HCT116 (cell line): ENCODE measurements at regions of chr14 and their contacts with region 1.

Region 1: GRCh38 chr14:49687942-49688700 is at the start of gene POLE2:
- DNase-seq: peak; percentile 44
- ATAC-seq: peak; percentile 90
- H3K4me3 ChIP-seq: peak within 1 kb of the TSS; percentile 76 to 81
- H3K27ac ChIP-seq: peak within 1 kb of the TSS; percentile 50
- H3K4me1 ChIP-seq: peaks cover 10 to 42% of the 10 kb centered on the region in 2 experiments
- H3K27me3 ChIP-seq: no peaks in the 10 kb centered on the region
- CTCF ChIP-seq: no peak
- POLR2A ChIP-seq: no peak
- RAD21 ChIP-seq: no peak
- total RNA-seq, gene POLE2: 24.5 TPM

Region 2: DNA sequence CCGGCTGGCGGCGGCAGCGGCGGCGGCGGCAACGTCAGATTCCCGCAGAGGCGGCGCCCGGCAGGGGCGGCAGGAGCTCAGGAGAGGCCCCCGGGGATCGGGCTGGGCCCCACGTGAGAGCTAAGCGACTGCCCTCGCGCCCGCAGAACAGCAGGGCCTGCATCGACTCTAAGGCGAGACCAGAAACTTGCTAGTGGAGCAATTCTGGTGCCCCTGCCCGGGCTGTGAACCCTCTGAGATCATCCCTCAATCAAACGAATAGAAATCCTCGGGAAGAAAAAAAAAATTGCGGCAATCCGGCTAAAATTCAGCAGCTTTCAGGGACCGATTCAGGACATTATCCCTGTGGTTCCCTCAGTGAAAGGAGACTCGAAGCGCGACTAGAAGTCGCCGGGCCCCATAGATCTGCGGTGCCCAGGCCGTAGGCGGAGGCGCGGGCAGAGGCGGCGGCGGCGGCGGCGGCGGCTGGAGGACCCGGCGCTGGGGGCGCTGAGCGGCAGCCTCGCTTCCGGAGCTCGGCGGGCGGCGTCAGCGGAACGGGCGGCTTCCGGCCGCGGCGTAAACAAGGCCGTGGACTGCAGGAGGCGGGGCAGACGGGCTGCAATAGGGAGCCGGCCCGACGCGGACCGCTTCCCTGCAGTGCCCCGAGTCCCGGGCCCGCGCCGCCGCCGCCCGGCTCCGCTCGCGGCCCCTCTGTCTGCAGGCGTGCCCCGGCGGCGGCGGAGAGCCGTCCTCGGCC is 79.6 kb after region 1 on chr14 and contains the start of gene KLHDC2:
- CTCF ChIA-PET with region 1: no interaction called
- POLR2A ChIA-PET with region 1: interaction called, 4 read pairs
- RAD21 ChIA-PET with region 1: no interaction called
- intact Hi-C with region 1: loop called (anchors 5 kb)
- DNase-seq: peak; percentile 59
- ATAC-seq: peak; percentile 90
- H3K4me3 ChIP-seq: peak within 1 kb of the TSS; percentile 74 to 99
- H3K27ac ChIP-seq: peak within 1 kb of the TSS; percentile 95
- H3K4me1 ChIP-seq: peaks cover 13 to 32% of the 10 kb centered on the region in 2 experiments
- H3K27me3 ChIP-seq: no peaks in the 10 kb centered on the region
- CTCF ChIP-seq: peak in 2 of 3 experiments; percentile 6 to 51; a peak in 3 of 6 replicates
- POLR2A ChIP-seq: peak; percentile 54
- RAD21 ChIP-seq: no peak
- total RNA-seq, gene KLHDC2: 26.4 TPM